Activated CD4-positive, alpha-beta T cell treated with anti-CD3 and anti-CD28 coated beads, Interleukin-2, amount 10 ng/mL, durations not matched to agents 24 days and 14 days (primary cell): ENCODE measurements at regions of chr6 and their contacts with region 1.

Region 1: DNA sequence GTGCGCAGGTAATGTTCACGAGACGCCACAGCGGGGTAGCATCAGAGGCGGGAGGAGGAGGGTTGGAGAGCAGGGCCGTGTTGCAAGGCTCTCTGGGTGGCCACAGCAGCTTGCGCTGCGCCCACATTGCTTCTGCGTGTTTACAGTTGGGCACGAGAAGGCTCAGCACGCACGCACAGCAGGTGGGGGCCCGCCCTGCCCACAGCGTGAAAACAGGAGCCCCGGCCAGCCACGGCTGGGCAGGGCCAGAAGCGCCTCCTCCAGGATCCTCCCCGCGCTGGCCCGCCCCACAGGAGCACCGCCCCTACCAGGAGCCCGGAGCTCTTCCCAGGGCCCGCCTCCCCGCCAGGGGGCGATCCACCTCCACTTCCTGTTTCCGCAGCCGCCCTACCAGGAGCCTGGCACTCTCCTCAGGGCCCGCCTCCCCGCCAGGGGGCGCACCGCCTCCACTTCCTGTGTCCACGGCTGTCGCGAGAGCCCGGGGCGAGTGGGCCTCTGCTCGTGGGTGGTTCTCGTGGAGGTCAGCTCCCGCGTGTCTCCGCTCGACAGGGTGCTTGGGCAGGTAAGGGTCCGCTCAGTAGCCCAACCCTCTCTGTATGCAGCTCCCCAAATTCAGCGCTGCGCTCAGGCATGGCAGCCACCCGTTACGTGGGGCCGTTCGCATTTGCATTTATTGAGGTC is at the start of gene FAM50B:
- DNase-seq: peak; percentile 97
- H3K4me3 Mint-ChIP-seq: peak within 1 kb of the TSS; percentile 75
- H3K27ac Mint-ChIP-seq: peak within 1 kb of the TSS; percentile 81
- H3K4me1 Mint-ChIP-seq: peaks cover 23% of the 10 kb centered on the region
- H3K27me3 Mint-ChIP-seq: peaks cover 4% of the 10 kb centered on the region
- total RNA-seq, gene FAM50B: 9.8 and 10.0 TPM in 2 replicates

Region 2: DNA sequence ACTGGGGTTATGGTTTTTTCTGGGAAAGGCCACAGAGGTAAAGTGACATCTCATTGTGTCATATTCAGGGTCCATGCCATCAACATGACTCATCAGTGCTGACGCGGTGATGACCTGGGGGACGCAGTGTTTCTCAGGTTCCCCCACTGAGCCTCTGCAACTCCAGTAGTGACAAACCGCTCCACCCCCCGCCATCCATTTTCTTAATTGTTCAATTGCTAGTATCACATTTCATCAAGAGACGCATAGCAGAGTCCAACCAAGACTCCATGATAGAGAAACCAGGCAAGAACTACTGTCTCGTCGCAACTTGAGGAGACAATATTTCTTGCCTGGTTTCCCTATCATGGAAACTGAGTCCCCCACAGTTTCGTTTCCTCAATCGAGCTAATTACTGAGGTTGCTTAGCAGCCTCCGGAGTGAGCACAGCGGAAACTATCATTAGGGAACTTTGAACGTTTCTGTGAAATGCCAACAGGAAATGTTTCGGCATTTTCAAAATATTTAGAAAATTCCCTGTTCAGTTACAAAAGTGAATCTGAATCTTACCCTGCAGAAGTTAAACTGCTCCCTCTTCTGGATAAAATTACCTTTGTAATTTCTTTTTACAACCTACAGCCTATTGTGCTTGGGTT is 995.2 kb before region 1 on chr6:
- intact Hi-C with region 1: loop called (anchors 5 kb)
- DNase-seq: peak; percentile 87
- H3K4me3 Mint-ChIP-seq: peak overlapping the region; percentile 80
- H3K27ac Mint-ChIP-seq: peak overlapping the region; percentile 98
- H3K4me1 Mint-ChIP-seq: peaks cover 65% of the 10 kb centered on the region
- H3K27me3 Mint-ChIP-seq: no peaks in the 10 kb centered on the region

Region 3: GRCh38 chr6:3592371-3592941 is 256.6 kb before region 1 on chr6:
- intact Hi-C with region 1: no loop called
- DNase-seq: no peak
- H3K4me3 Mint-ChIP-seq: no peak overlapping the region
- H3K27ac Mint-ChIP-seq: no peak overlapping the region
- H3K4me1 Mint-ChIP-seq: no peaks in the 10 kb centered on the region
- H3K27me3 Mint-ChIP-seq: peaks cover 4% of the 10 kb centered on the region

Region 4: GRCh38 chr6:3868544-3868943 is 19.5 kb after region 1 on chr6:
- intact Hi-C with region 1: loop called (anchors 1 kb)
- DNase-seq: no peak
- H3K4me3 Mint-ChIP-seq: no peak overlapping the region
- H3K27ac Mint-ChIP-seq: no peak overlapping the region
- H3K4me1 Mint-ChIP-seq: peaks cover 17% of the 10 kb centered on the region
- H3K27me3 Mint-ChIP-seq: peaks cover 11% of the 10 kb centered on the region

Region 5: GRCh38 chr6:3929281-3929798 is 80.3 kb after region 1 on chr6:
- intact Hi-C with region 1: loop called (anchors 2 kb)
- DNase-seq: no peak
- H3K4me3 Mint-ChIP-seq: no peak overlapping the region
- H3K27ac Mint-ChIP-seq: no peak overlapping the region
- H3K4me1 Mint-ChIP-seq: no peaks in the 10 kb centered on the region
- H3K27me3 Mint-ChIP-seq: peaks cover 16% of the 10 kb centered on the region

Region 6: DNA sequence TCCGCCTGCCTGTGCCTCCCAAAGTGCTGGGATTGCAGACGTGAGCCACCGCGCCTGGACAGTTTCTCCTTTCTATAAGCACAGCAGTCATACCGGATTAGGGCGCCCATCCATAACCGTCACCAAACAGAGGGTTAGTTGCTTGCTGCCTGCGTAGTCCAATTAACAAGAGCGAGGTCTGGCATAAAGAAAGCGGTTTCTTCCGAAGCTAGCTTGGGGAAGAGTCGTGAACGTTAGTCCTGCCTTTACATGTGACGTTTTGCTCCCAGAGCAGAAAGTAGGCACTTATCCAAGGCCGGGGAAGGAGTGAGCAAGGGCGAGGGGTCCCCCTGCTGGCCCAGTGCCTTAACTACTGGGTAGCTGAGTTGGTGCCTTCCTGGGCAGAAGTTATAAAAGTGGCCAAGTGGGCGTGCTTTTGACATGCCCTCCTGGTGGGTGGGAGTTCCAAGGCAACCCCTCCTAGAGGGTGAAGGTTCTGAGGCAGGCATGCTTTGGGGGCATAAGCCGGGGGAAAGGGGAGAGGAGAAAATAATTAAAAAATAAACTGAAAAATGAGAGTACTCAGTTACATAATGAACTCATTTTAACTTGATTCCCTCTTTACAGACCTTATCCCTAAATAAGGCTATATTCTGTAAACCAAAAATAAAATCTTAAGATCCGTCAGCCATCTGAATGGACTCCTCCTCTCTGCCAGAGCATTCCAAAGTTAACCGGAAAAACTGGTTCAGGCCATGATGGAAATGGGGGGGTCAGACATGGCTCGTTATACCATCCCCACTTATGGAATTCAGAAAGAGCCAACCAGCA is 141.8 kb after region 1 on chr6:
- intact Hi-C with region 1: loop called (anchors 10 kb)
- DNase-seq: peak; percentile 90
- H3K4me3 Mint-ChIP-seq: no peak overlapping the region
- H3K27ac Mint-ChIP-seq: no peak overlapping the region
- H3K4me1 Mint-ChIP-seq: peaks cover 10% of the 10 kb centered on the region
- H3K27me3 Mint-ChIP-seq: no peaks in the 10 kb centered on the region